ENCODE measurements at regions of chr9 and their contacts with region 1.

Region 1: DNA sequence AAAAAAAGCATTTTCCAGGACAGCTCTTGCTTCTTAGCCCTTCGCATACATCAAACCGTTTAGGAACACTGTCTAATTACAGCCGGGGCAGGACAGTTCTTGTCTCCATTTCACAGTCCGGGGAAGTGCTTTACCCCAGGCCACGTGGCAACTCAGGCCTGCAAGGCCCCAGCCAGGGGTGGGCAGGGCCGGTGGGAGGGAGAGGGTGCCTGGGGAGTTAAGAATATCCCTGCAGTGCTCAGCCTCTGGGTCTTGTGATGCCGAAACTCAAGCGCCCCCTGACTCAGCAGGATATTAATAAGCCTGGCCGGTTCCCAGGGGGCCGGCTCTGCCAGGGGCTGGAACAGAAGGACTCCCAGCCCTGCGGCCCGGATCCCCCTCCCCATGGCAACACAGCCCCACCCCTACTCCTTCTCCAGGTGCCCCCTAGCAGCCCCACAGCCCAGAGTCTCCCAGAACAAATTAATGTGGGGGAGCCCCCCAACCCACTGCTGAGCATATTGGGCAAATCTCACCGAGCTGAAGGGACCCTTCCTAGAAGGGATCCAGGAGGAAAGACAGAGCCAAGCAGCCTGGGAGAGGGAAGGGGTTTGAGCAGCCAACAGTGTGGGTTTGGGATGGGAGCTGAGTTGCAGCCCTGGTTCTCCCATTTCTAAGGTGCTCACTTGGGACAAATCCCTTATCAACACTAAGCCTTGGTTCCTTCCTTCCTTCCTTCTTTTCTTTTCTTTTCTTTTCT is 45.3 kb downstream of the PLPP7 start:
- DNase-seq: no peak
- ATAC-seq: no peak
- H3K4me3 Mint-ChIP-seq: no peak overlapping the region
- H3K27ac Mint-ChIP-seq: no peak overlapping the region
- H3K4me1 Mint-ChIP-seq: peaks cover 3% of the 10 kb centered on the region
- H3K27me3 Mint-ChIP-seq: no peaks in the 10 kb centered on the region
- CTCF ChIP-seq: no peak

Region 2: DNA sequence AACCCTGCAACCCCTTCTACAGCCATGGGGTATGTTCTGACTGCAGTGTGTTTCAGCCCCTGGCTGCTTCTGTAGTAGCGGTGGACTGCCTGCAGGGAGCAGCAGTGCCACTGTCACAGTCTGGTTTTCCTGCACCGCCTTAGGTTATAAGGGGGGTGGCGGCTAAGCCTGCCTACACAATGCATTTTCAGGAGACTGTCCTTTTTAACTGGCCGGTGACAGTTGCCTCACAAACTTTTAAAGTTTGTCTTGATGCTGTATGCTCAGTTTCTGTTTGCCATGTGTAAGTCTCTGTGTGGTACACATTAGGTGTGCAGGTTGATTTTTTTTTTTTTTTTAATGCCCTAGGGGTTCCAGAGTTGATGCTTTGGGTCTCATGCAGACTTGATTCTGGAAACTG is 156.4 kb before region 1 on chr9:
- CTCF ChIA-PET with region 1: interaction called, 164 read pairs
- POLR2A ChIA-PET with region 1: interaction called, 3 read pairs
- intact Hi-C with region 1: loop called (anchors 1 kb)
- DNase-seq: peak; percentile 82
- ATAC-seq: peak; percentile 100
- H3K4me3 Mint-ChIP-seq: no peak overlapping the region
- H3K27ac Mint-ChIP-seq: no peak overlapping the region
- H3K4me1 Mint-ChIP-seq: peaks cover 4% of the 10 kb centered on the region
- H3K27me3 Mint-ChIP-seq: no peaks in the 10 kb centered on the region
- CTCF ChIP-seq: peak; percentile 97

Region 3: DNA sequence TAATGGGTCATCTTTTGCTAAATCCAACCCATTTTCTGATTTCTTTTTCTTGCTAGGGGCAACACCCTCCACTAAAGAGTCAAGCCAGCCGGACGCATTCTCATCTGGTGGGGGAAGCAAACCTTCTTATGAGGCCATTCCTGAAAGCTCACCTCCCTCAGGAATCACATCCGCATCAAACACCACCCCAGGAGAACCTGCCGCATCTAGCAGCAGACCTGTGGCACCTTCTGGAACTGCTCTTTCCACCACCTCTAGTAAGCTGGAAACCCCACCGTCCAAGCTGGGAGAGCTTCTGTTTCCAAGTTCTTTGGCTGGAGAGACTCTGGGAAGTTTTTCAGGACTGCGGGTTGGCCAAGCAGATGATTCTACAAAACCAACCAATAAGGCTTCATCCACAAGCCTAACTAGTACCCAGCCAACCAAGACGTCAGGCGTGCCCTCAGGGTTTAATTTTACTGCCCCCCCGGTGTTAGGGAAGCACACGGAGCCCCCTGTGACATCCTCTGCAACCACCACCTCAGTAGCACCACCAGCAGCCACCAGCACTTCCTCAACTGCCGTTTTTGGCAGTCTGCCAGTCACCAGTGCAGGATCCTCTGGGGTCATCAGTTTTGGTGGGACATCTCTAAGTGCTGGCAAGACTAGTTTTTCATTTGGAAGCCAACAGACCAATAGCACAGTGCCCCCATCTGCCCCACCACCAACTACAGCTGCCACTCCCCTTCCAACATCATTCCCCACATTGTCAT is 137.5 kb before region 1 on chr9:
- CTCF ChIA-PET with region 1: interaction called, 24 read pairs
- POLR2A ChIA-PET with region 1: interaction called, 3 read pairs
- intact Hi-C with region 1: no loop called
- DNase-seq: no peak
- ATAC-seq: no peak
- H3K4me3 Mint-ChIP-seq: no peak overlapping the region
- H3K27ac Mint-ChIP-seq: peak overlapping the region; percentile 15
- H3K4me1 Mint-ChIP-seq: no peaks in the 10 kb centered on the region
- H3K27me3 Mint-ChIP-seq: no peaks in the 10 kb centered on the region
- CTCF ChIP-seq: no peak

Region 4: DNA sequence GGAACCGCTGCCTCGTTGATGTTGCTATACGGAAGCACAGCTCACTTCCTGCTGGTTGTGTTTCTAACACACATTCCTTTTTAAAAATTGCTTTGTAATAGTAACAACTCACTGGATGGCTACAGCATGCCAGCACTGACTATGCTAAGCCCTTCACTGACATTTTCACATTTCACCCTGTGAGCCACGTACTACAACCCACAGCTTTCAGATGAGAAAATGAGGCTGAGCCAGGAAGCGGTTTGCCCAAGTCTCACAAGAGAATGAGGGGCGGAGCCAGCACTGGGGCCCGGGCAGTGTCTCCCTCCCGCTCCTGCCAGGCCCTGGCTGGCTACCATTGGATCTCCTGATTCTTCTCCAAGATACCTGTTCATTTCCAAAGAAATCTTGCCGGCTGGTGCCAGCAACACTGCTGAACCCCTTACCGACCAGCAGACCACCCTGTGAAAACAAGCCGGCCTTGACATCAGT is 96.8 kb before region 1 on chr9:
- CTCF ChIA-PET with region 1: interaction called, 17 read pairs
- POLR2A ChIA-PET with region 1: no interaction called
- intact Hi-C with region 1: no loop called
- DNase-seq: peak; percentile 96
- ATAC-seq: peak; percentile 95
- H3K4me3 Mint-ChIP-seq: peak overlapping the region; percentile 73
- H3K27ac Mint-ChIP-seq: peak overlapping the region; percentile 98
- H3K4me1 Mint-ChIP-seq: peaks cover 39% of the 10 kb centered on the region
- H3K27me3 Mint-ChIP-seq: no peaks in the 10 kb centered on the region
- CTCF ChIP-seq: no peak

Region 5: DNA sequence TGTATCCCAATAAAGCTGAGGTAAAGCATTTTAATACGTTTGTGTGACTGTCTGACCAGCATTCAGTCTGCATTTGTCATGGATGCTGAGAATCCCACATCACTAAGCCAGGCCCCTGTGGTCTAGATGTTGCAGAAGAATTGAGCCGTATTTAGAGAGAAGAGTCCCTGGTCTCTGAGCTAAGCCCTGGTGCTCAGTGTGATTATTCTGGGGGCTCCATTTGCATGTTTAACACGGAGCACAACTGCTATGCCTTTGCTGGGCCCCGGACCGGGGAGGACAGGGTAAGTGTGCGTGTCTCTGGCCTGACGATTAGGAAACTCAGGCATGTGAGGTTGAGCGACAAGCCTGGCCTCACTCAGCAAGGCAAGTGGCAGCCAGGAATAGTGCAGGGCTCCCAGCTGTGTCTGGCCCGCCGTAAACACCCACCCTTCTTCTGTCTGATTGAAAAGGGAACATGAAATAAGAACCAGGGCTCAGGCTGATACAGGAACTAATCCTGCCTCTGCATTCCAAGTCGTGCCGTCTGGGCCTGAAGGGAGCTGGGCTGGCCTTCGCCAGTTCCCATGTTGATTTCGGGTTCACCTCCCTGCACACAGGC is 80.8 kb before region 1 on chr9:
- CTCF ChIA-PET with region 1: interaction called, 12 read pairs
- POLR2A ChIA-PET with region 1: no interaction called
- intact Hi-C with region 1: no loop called
- DNase-seq: no peak
- ATAC-seq: no peak
- H3K4me3 Mint-ChIP-seq: peak overlapping the region; percentile 30
- H3K27ac Mint-ChIP-seq: peak overlapping the region; percentile 90
- H3K4me1 Mint-ChIP-seq: peaks cover 51% of the 10 kb centered on the region
- H3K27me3 Mint-ChIP-seq: no peaks in the 10 kb centered on the region
- CTCF ChIP-seq: no peak

Region 6: GRCh38 chr9:131297903-131298302 is 36.9 kb before region 1 on chr9:
- CTCF ChIA-PET with region 1: interaction called, 23 read pairs
- POLR2A ChIA-PET with region 1: interaction called, 4 read pairs
- intact Hi-C with region 1: no loop called
- DNase-seq: no peak
- ATAC-seq: no peak
- H3K4me3 Mint-ChIP-seq: no peak overlapping the region
- H3K27ac Mint-ChIP-seq: no peak overlapping the region
- H3K4me1 Mint-ChIP-seq: no peaks in the 10 kb centered on the region
- H3K27me3 Mint-ChIP-seq: no peaks in the 10 kb centered on the region
- CTCF ChIP-seq: no peak

Region 7: DNA sequence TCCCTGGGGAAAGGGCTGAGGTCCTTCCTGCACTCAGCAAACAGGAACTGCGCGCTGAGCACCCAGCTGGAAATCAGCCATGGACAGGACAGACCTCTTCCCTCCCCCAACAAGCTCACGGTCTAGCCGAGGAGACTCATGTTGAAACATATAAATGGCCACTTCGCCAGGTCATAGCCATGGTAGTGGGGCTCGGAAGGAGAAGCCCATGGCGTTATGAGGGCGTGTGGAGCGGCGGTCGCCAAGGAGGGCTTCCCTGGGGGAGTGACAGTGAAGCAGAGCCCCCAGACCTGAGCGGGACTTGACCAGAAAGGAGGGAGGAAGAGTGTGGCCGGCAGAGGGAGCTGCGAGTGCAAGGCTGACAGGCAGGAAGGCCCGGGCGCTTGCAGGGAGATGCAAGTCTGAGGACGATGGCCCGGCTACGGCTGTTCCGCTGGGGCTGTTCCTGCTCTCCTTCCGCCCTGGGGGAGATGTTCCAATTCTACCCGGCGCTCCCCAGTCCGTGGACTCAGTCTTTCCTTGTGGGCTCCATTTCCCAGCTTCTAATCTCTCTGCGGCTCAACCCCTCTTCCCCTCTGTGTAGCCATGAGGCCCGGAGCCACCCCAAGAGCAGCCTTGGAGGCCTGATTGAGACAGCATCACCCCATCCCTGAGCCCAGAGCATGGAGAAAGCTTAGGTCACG is 15.2 kb after region 1 on chr9:
- CTCF ChIA-PET with region 1: interaction called, 17 read pairs
- POLR2A ChIA-PET with region 1: interaction called, 3 read pairs
- intact Hi-C with region 1: no loop called
- DNase-seq: peak; percentile 95
- ATAC-seq: peak; percentile 99
- H3K4me3 Mint-ChIP-seq: peak overlapping the region; percentile 38
- H3K27ac Mint-ChIP-seq: peak overlapping the region; percentile 69
- H3K4me1 Mint-ChIP-seq: peaks cover 7% of the 10 kb centered on the region
- H3K27me3 Mint-ChIP-seq: no peaks in the 10 kb centered on the region
- CTCF ChIP-seq: peak; percentile 81